ENCODE measurements at regions of chr7 and their contacts with region 1.

Region 1: GRCh38 chr7:140003913-140004382 is 58.8 kb downstream of the PARP12 start:
- DNase-seq: peak; percentile 63 to 80
- ATAC-seq: peak; percentile 64 to 74; a peak in 5 of 6 replicates
- H3K4me3 ChIP-seq: no peak overlapping the region
- H3K27ac ChIP-seq: no peak overlapping the region
- H3K4me1 ChIP-seq: no peaks in the 10 kb centered on the region
- CTCF ChIP-seq: peak; percentile 79
- EP300 ChIP-seq: no peak
- POLR2A ChIP-seq: no peak
- RAD21 ChIP-seq: peak; percentile 84 to 86

Region 2: DNA sequence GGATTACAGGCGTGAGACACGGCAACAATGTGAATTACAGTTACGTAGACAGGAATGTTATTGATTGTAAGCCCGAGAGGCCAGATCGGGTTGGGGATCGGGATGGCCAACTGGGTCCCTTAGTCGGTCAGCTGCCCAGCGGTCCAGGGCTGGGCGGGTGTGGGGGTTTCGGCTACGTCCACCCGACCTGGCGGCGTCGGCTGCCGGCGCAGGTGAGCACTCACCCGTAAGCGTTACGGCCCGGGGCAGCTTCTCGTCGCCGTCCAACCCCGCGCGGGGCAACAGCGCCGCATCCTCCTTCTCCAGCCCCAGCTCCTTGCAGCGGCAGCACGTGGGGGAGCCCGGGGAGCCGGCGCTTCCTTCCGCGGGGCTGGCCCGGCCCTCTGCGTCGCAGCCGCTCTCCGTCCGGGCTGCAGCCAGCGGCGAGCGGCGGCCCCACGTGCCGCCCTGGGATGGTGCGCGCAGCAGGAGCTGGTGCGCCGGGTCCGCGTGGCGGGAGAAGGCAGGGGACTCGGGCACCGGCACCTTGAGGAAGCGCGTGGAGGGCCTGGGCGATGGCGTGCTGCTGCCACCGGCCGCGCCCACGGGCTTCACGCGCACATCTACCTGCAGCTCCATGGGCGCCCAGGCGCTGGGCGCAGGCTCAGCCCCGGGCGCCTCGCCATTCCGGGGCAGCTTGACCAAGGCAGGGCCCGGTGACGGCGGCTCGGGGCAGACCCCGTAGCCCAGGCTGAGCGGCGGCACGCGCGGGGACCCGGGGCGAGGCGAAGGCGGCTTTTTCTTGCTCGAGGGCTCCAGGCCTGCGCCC is 521.1 kb before region 1 on chr7:
- CTCF ChIA-PET with region 1: interaction called, 10 read pairs
- POLR2A ChIA-PET with region 1: no interaction called
- DNase-seq: peak in 1 of 2 experiments; percentile 37
- ATAC-seq: peak; percentile 76 to 78
- H3K4me3 ChIP-seq: peak overlapping the region; percentile 51
- H3K27ac ChIP-seq: peak overlapping the region; percentile 37 to 73; a peak in 5 of 6 replicates
- H3K4me1 ChIP-seq: peaks cover 8% of the 10 kb centered on the region; the same call in 1 of the 3 replicates
- CTCF ChIP-seq: no peak
- EP300 ChIP-seq: no peak
- POLR2A ChIP-seq: no peak
- RAD21 ChIP-seq: no peak

Region 3: DNA sequence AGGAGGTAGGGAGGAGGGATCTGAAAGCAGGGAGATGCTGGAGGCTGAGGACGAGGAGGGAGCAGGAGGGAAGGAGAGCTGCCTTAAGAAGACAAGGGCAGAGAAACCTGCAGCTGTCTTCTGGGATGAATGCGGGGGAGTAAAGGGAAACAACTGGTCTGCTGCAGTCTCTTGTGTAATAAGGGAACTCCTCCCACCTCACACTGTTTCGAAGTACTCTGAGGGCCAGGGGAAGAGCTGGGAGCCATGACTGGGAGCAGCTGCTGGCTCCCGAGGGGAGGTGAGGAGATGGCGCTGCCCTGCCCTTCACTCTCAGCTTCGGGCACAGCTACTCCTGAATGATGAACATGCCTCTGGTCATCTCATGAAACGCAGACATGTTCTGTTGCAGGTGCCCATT is 415.3 kb before region 1 on chr7:
- CTCF ChIA-PET with region 1: interaction called, 16 read pairs
- POLR2A ChIA-PET with region 1: no interaction called
- DNase-seq: no peak
- ATAC-seq: peak in 1 of 2 experiments; percentile 51; a peak in 3 of 6 replicates
- H3K4me3 ChIP-seq: no peak overlapping the region
- H3K27ac ChIP-seq: no peak overlapping the region
- H3K4me1 ChIP-seq: no peaks in the 10 kb centered on the region
- CTCF ChIP-seq: no peak
- EP300 ChIP-seq: no peak
- POLR2A ChIP-seq: no peak
- RAD21 ChIP-seq: no peak

Region 4: GRCh38 chr7:139626817-139627216 is 377.1 kb before region 1 on chr7:
- CTCF ChIA-PET with region 1: interaction called, 167 read pairs
- POLR2A ChIA-PET with region 1: no interaction called
- DNase-seq: no peak
- ATAC-seq: no peak
- H3K4me3 ChIP-seq: no peak overlapping the region
- H3K27ac ChIP-seq: no peak overlapping the region
- H3K4me1 ChIP-seq: no peaks in the 10 kb centered on the region
- CTCF ChIP-seq: no peak
- EP300 ChIP-seq: no peak
- POLR2A ChIP-seq: no peak
- RAD21 ChIP-seq: no peak

Region 5: GRCh38 chr7:139660317-139661042 is 343.5 kb before region 1 on chr7:
- CTCF ChIA-PET with region 1: interaction called, 37 read pairs
- POLR2A ChIA-PET with region 1: no interaction called
- DNase-seq: no peak
- ATAC-seq: no peak
- H3K4me3 ChIP-seq: no peak overlapping the region
- H3K27ac ChIP-seq: peak overlapping the region in 1 of 2 experiments; percentile 35; a peak in 4 of 6 replicates
- H3K4me1 ChIP-seq: peaks cover 12% of the 10 kb centered on the region; the same call in 2 of the 3 replicates
- CTCF ChIP-seq: no peak
- EP300 ChIP-seq: no peak
- POLR2A ChIP-seq: no peak
- RAD21 ChIP-seq: no peak

Region 6: GRCh38 chr7:139972029-139972428 is 31.9 kb before region 1 on chr7:
- CTCF ChIA-PET with region 1: interaction called, 25 read pairs
- POLR2A ChIA-PET with region 1: no interaction called
- DNase-seq: no peak
- ATAC-seq: peak in 1 of 2 experiments; percentile 39; a peak in 2 of 6 replicates
- H3K4me3 ChIP-seq: no peak overlapping the region
- H3K27ac ChIP-seq: no peak overlapping the region
- H3K4me1 ChIP-seq: no peaks in the 10 kb centered on the region
- CTCF ChIP-seq: no peak
- EP300 ChIP-seq: no peak
- POLR2A ChIP-seq: no peak
- RAD21 ChIP-seq: no peak

Region 7: DNA sequence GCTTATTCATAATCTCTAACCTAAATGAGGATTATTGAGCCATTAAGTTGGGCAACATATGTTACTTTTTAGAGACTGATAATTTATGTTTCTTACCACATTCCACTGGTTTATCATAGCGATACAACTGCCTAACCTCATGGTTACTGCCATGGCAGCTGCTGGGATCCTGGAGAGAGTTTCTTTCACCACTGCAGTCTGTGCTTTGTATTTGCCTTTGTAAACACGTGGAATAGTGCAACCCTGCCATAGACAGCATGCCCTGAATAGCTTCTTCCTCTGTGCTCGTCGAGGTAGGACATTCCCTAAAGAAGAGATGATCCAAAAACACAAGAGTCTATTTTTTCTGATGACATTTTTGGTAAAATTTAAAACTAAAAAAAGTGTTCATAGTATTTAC is 92.5 kb after region 1 on chr7:
- CTCF ChIA-PET with region 1: no interaction called
- POLR2A ChIA-PET with region 1: no interaction called
- DNase-seq: no peak
- ATAC-seq: no peak
- H3K4me3 ChIP-seq: no peak overlapping the region
- H3K27ac ChIP-seq: no peak overlapping the region
- H3K4me1 ChIP-seq: no peaks in the 10 kb centered on the region
- CTCF ChIP-seq: no peak
- EP300 ChIP-seq: no peak
- POLR2A ChIP-seq: no peak
- RAD21 ChIP-seq: no peak

Region 8: DNA sequence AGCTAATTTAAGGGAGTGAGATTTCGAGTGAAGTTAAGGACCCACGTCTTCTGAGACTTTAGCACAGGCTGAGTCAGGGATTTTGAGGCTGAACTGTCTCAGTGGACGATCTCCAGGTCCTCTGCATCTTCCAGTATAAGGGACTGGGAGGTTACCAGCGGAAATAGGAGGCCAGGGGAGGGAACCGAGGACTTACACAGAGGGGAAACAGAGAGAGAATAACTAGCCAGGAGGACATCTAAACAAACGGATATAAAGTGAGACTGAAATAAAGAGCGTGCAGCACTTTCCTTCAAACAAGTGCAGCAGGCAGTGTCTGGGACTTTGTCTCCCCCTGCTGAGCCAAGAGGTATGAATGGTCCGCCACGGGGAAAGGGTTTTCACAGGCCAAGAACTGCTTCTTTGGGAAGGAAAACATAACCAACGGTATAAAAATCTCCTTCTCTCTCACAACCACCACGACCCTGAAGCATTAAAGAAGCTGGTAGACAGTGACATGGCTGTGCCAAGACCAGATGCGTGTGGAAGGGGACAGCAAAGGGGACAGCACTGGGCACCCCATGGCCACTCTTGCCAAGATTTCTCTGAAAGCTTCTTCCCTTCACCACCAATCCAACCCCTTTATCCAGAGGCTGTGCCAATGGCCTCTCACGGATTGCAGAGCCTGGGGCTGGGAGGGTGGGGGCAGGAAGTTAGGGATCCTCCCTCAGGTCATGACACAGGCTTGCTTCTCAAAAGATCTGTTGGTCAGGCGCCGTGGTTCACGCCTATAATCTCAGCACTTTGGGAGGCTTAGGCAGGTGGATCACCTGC is 322.4 kb after region 1 on chr7:
- CTCF ChIA-PET with region 1: interaction called, 22 read pairs
- POLR2A ChIA-PET with region 1: no interaction called
- DNase-seq: peak; percentile 67 to 79
- ATAC-seq: peak; percentile 95
- H3K4me3 ChIP-seq: no peak overlapping the region
- H3K27ac ChIP-seq: 0 out of 6 replicates have a peak overlapping the region, but pooled peaks of 1 of the 2 experiments have one; percentile 52
- H3K4me1 ChIP-seq: no peaks in the 10 kb centered on the region
- CTCF ChIP-seq: peak; percentile 90
- EP300 ChIP-seq: no peak
- POLR2A ChIP-seq: no peak
- RAD21 ChIP-seq: peak; percentile 95 to 96